CD4-positive, alpha-beta memory T cell (primary cell): ENCODE measurements at regions of chr2 and their contacts with region 1.

Region 1: DNA sequence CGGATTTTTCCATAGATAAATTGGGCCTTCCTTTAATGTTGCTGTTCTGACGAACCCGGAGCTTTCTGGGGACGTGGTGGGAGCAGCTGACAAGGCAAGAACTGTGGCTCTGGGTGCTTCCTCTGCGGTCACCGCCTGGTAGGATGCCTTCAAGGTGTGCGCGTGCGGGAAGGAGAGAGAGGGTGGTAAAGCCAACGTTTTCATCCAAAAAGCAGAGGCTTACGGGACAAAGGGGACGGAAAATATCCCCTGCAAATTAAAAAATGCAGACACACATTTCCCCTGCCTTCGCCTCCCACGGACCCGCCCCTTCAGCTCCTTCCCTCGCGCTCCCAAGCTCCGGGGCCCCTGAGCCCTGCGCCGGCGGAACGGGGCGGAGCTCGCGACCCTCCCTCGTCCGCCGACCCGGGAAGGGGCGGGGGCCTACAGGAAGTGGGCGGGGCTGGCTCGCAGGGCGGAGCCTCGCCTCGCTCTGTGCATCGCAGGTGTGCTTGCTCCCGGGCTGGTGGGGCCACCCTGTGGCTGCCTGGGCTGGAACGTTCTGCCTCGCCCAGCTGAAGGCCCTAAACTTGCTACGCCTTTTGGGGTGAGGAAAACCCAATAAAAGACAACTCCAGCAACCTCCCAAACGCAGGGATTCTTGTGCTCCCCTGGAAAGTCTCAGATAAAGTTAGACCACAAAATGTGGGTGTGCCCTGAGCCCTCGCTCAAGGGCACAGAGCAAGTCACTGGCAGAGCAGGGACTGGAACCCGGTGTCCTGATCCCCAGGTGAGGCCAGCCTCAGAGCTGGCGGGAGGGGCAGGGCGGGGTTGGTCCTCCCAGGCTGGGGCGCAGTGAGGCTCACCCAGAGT is 25.4 kb upstream of the SLC66A3 start:
- DNase-seq: peak; percentile 81 to 85 (median 85)
- H3K4me3 ChIP-seq: peak overlapping the region; percentile 19 to 57
- H3K4me3 Mint-ChIP-seq: peak overlapping the region; percentile 77 to 93 (median 82)
- H3K27ac ChIP-seq: peak overlapping the region; percentile 54
- H3K27ac Mint-ChIP-seq: peak overlapping the region; percentile 77 to 92 (median 84)
- H3K4me1 ChIP-seq: peaks cover 48% of the 10 kb centered on the region
- H3K4me1 Mint-ChIP-seq: peaks cover 14 to 53% (median 37%) of the 10 kb centered on the region in 4 donors
- H3K27me3 ChIP-seq: no peaks in the 10 kb centered on the region
- H3K27me3 Mint-ChIP-seq: no peaks in the 10 kb centered on the region

Region 2: DNA sequence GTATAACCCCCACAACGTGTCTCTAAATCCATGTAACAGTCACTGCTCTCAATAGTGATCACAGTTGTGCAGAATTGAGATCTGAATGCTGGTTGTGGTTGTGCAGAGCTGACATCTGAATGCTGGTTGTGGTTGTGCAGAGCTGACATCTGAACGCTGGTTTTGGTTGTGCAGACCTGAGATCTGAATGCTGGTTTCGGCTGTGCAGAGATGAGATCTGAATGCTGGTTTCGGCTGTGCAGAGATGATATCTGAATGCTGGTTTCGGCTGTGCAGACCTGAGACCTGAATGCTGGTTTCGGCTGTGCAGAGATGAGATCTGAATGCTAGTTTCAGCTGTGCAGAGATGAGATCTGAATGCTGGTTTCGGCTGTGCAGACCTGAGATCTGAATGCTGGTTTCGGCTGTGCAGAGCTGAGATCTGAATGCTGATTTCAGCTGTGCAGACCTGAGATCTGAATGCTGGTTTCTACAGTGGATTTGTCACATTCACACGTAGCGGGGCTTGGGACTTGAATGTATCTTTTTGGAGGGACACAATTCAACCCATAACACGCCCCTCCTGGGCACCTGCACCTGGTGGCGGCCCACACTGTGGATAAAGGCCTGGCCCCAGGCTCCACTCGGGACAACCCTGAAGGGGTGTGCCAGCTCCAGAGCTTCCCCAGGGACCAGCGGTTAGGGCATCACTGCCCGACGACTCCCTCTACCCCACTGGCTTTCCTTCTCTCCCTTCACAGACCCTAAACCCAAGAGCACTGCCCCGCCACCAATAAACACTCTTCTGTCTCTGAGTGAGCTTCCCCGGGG is 25.6 kb before region 1 on chr2:
- CTCF ChIA-PET with region 1: interaction called, 47 read pairs
- POLR2A ChIA-PET with region 1: interaction called, 9 read pairs
- intact Hi-C with region 1: no loop called
- DNase-seq: peak; percentile 36 to 63 (median 47)
- H3K4me3 ChIP-seq: peak overlapping the region in 1 of 2 donors; percentile 44
- H3K4me3 Mint-ChIP-seq: peak overlapping the region; percentile 61 to 90 (median 76)
- H3K27ac ChIP-seq: no peak overlapping the region
- H3K27ac Mint-ChIP-seq: peak overlapping the region; percentile 33 to 85 (median 80)
- H3K4me1 ChIP-seq: peaks cover 52% of the 10 kb centered on the region
- H3K4me1 Mint-ChIP-seq: peaks cover 21 to 36% (median 33%) of the 10 kb centered on the region in 4 donors
- H3K27me3 ChIP-seq: no peaks in the 10 kb centered on the region
- H3K27me3 Mint-ChIP-seq: no peaks in the 10 kb centered on the region

Region 3: GRCh38 chr2:11160731-11161455 is 31.1 kb after region 1 on chr2:
- CTCF ChIA-PET with region 1: interaction called, 53 read pairs
- POLR2A ChIA-PET with region 1: interaction called, 55 read pairs
- intact Hi-C with region 1: no loop called
- DNase-seq: peak in 4 of 5 donors; percentile 14 to 32 (median 24)
- H3K4me3 ChIP-seq: peak overlapping the region in 1 of 2 donors; percentile 17
- H3K4me3 Mint-ChIP-seq: peak overlapping the region; percentile 57 to 83 (median 70)
- H3K27ac ChIP-seq: peak overlapping the region; percentile 42
- H3K27ac Mint-ChIP-seq: peak overlapping the region; percentile 77 to 94 (median 90)
- H3K4me1 ChIP-seq: peaks cover 28% of the 10 kb centered on the region
- H3K4me1 Mint-ChIP-seq: peaks cover 15 to 40% (median 31%) of the 10 kb centered on the region in 4 donors
- H3K27me3 ChIP-seq: no peaks in the 10 kb centered on the region
- H3K27me3 Mint-ChIP-seq: no peaks in the 10 kb centered on the region

Region 4: DNA sequence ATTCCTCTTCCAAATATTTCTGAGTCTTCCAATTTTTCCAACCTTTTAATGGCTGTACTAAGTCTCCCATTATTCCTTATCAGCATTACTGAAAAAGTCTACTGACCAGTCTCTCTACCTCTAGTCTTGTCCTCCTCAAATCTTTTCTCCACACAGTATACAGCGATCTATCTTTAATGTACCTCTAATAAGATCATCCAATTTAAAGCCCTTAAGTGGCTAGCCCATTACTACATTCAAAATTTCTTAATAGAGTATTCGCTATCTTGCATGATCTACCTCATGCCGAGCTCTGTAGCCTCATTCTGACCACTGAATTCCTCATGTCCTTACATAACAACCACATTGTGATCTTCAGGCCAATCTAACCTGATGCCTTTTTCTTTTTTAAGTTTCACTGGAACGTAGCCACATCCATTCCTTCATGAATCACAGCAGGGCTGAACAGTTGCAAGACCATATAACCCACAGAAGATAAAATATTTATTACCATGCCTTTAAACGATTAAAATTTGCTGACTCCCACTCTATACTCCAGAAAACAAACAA is 83.3 kb after region 1 on chr2:
- CTCF ChIA-PET with region 1: interaction called, 15 read pairs
- POLR2A ChIA-PET with region 1: no interaction called
- intact Hi-C with region 1: no loop called
- DNase-seq: no peak
- H3K4me3 ChIP-seq: no peak overlapping the region
- H3K4me3 Mint-ChIP-seq: no peak overlapping the region
- H3K27ac ChIP-seq: no peak overlapping the region
- H3K27ac Mint-ChIP-seq: no peak overlapping the region
- H3K4me1 ChIP-seq: no peaks in the 10 kb centered on the region
- H3K4me1 Mint-ChIP-seq: no peaks in the 10 kb centered on the region
- H3K27me3 ChIP-seq: no peaks in the 10 kb centered on the region
- H3K27me3 Mint-ChIP-seq: no peaks in the 10 kb centered on the region

Region 5: GRCh38 chr2:11411768-11412448 is 282.1 kb after region 1 on chr2:
- CTCF ChIA-PET with region 1: interaction called, 37 read pairs
- POLR2A ChIA-PET with region 1: no interaction called
- intact Hi-C with region 1: loop called (anchors 1 kb)
- DNase-seq: no peak
- H3K4me3 ChIP-seq: no peak overlapping the region
- H3K4me3 Mint-ChIP-seq: peak overlapping the region in 1 of 8 donors; percentile 15
- H3K27ac ChIP-seq: no peak overlapping the region
- H3K27ac Mint-ChIP-seq: no peak overlapping the region
- H3K4me1 ChIP-seq: no peaks in the 10 kb centered on the region
- H3K4me1 Mint-ChIP-seq: peaks cover 0 to 2% (median 0%) of the 10 kb centered on the region in 4 donors
- H3K27me3 ChIP-seq: no peaks in the 10 kb centered on the region
- H3K27me3 Mint-ChIP-seq: peaks cover 22 to 23% of the 10 kb centered on the region in 2 donors

Region 6: GRCh38 chr2:11477994-11478393 is 348.2 kb after region 1 on chr2:
- CTCF ChIA-PET with region 1: interaction called, 12 read pairs
- POLR2A ChIA-PET with region 1: no interaction called
- intact Hi-C with region 1: no loop called
- DNase-seq: peak; percentile 57 to 71 (median 63)
- H3K4me3 ChIP-seq: no peak overlapping the region
- H3K4me3 Mint-ChIP-seq: no peak overlapping the region
- H3K27ac ChIP-seq: no peak overlapping the region
- H3K27ac Mint-ChIP-seq: no peak overlapping the region
- H3K4me1 ChIP-seq: peaks cover under 1% of the 10 kb centered on the region
- H3K4me1 Mint-ChIP-seq: peaks cover under 1 to 5% (median 1%) of the 10 kb centered on the region in 4 donors
- H3K27me3 ChIP-seq: no peaks in the 10 kb centered on the region
- H3K27me3 Mint-ChIP-seq: peaks cover 12 to 17% of the 10 kb centered on the region in 2 donors